Right ventricle myocardium inferior (tissue), 1 donor: ENCODE measurements at regions of chr10 and their contacts with region 1.

Region 1: DNA sequence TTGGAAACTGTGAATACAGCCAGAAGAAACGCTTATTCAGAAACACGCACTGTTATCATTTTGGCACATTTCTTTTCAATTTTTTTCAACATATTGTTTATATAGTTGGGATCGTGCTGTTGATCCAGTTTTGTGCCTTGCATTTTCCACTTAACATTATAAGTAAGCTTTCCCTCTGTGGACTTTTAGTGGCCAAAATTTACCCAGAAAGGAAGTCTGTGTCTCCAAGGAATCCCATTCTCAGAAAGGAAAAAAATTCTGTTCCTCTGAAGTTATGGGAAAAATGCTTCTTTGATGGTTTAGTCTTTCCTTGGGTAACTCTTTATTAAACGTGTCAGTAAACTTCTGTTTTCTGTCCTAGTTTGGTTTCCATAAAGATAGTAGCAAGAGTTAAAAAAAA is 280.0 kb downstream of the REEP3 start:
- DNase-seq: no peak
- ATAC-seq: no peak

Region 2: DNA sequence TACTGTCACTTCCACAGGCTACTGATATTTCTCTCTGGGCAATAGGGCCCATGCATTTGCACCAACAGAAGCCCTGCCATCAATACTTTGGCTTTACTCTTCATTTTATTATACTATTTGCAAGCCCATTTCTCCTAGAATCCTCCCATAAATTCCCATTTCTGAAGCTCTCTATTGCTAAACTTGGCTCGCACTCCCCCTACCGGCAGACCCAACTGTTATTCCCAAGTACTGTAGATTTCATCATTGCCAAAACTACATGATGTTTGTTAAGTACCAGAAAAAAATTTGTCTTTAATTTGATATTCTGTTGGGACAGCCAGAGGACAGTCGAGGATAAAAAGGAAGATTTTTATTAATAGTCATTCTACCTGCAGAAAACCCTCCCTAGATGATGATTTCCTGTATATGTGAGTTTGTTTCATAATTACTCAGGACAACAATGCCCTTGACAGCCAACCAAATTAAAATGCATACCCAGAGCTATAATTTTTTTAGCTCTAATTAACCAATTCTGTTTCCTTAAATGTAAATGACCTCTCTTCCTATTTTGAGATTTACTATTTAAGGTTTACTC is 18.7 kb after region 1 on chr10:
- intact Hi-C with region 1: loop called (anchors 1 kb)
- DNase-seq: peak; percentile 75
- ATAC-seq: peak; percentile 50

Region 3: GRCh38 chr10:63885156-63885555 is 84.0 kb after region 1 on chr10:
- intact Hi-C with region 1: no loop called
- DNase-seq: no peak
- ATAC-seq: no peak